Activated T-helper 2 cell treated with anti-CD3 and anti-CD28 coated beads, Interferon-gamma antibody, Interleukin-2, Interleukin-4, amounts not matched to agents 10 μg/mL and 5 μg/mL and 100 μg/mL, durations not matched to agents 14 hours and 24 hours and 36 hours (primary cell): ENCODE measurements at regions of chr10 and their contacts with region 1.

Region 1: GRCh38 chr10:95693668-95694534 is at the start of gene TCTN3:
- DNase-seq: peak; percentile 97
- H3K4me3 Mint-ChIP-seq: peak within 1 kb of the TSS; percentile 99
- H3K27ac Mint-ChIP-seq: peak within 1 kb of the TSS; percentile 97
- H3K4me1 Mint-ChIP-seq: peaks cover 39% of the 10 kb centered on the region
- H3K27me3 Mint-ChIP-seq: no peaks in the 10 kb centered on the region
- total RNA-seq, gene TCTN3: 66.5 and 71.3 TPM in 2 replicates

Region 2: DNA sequence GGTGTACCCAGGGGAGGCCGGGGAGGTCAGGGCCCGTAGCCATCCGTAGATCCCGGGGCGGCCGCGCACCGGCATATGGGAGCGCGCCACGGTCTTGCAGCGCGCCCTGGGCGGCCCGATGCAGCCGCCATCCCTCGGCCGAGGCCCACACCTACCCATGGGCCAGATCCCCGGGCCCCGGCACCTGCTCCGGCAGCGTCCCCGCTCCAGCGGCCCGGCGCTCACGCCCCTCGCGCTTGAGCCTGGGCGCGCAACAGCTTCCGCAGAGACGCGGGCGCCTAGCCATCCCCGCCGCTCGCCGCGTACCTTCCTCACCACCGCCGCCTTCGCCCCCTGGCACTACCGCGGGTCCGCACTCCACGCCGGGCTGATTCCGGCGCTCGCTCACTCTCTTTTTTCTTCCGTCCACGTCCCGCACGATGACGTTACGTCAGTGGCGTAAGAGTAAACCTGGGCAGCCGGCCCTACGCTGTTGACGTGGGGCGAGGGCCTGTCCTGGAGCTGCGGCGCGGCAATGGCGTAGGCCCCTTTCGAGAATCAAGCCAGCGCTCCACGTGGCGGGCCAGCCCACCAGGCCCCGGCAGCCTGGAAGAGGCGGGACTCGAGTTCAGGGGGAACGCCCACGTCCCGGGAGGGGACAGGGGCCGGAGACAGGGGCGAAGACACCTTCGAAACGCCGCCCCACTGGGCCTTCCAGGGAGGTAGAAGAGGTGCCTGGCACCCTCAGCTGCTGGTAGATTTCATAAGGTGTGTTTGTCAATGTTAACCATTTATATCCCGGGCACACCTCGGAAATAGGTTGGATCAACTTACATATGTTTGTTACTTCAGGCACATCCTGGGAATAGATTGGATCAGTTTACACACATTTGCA is 37.4 kb before region 1 on chr10 and contains the start of gene ALDH18A1:
- intact Hi-C with region 1: loop called (anchors 1 kb)
- DNase-seq: peak; percentile 87
- H3K4me3 Mint-ChIP-seq: peak within 1 kb of the TSS; percentile 97
- H3K27ac Mint-ChIP-seq: peak within 1 kb of the TSS; percentile 97
- H3K4me1 Mint-ChIP-seq: peaks cover 17% of the 10 kb centered on the region
- H3K27me3 Mint-ChIP-seq: no peaks in the 10 kb centered on the region
- total RNA-seq, gene ALDH18A1: 121 and 127 TPM in 2 replicates

Region 3: DNA sequence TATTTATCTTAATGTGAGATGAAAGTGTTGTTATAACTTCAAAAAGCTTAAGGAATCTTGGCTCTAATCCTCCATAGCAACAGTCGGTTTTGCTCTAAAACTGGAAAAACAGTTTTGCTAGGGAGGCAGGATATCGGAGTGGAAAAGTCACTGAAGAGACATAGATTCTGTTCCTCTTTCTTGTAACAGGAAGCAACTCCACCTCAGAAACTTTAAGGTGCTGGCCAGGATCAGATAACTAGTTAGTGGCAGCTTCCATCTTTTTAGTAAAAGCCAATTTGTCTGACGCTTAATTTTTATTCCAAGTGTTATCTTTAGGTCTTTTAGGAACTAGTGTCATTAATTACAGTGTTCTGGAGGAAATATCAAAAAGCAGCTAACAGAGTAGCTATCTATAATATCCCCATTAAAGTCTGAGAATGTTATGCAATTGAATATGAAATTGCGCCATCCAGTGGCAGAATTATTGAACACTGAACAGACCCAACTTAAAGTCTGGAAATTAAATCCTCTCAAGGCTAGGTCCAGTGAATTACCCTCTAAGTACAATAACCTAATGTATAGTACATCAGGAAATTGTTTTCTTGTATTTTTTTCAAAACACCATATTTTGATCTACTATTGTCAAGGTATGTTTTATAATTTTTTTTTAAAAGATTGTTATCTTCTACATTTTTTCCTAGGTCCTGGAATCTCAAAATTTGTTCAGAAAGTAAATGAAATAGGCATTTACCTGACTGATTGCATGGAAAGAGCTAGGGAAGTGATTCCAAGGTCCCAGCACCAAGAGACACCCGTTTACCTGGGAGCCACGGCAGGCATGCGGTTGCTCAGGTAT is 148.0 kb after region 1 on chr10:
- intact Hi-C with region 1: loop called (anchors 1 kb)
- DNase-seq: no peak
- H3K4me3 Mint-ChIP-seq: no peak overlapping the region
- H3K27ac Mint-ChIP-seq: peak overlapping the region; percentile 89
- H3K4me1 Mint-ChIP-seq: peaks cover 56% of the 10 kb centered on the region
- H3K27me3 Mint-ChIP-seq: peaks cover 2% of the 10 kb centered on the region

Region 4: DNA sequence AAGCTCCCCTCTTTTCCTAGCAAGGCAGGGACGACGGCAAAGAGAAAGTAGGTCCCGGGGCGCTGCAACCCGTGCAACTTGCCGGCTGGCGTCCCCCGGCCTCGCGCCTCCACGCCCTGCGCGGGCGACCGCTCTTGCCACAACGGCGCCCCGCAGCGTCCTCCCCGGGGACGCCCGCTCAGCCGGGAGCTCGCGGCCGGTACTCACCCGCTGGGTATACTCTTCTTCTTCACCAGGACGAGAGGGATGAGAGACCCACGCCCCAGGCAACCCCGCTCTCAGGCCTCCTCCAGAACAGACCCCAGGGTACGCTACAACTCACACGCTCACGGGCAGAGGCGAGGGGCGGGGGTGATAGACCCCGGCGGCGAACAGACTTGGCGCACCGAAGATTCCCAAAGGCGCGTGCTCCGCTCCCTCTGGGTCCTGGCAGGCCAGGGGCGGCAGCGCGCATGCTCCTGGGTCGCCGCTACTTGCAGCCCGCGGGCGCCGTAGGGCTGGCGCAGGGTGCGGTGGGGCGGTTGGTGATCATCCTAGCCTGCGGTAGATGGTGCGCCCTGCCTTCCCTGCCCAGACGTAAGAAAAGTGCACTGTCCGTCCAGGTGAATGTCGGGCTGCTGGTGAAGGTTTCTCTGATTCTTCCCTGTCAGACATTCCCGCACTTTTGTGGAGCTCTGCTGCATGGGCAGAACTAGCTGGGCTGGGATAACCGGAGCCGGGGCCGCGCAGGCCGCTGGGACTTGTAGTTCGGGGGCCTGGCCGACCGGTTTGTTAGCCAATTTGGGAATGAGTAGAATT is 213.8 kb after region 1 on chr10 and contains the start of gene CC2D2B:
- intact Hi-C with region 1: loop called (anchors 5 kb)
- DNase-seq: peak; percentile 70
- H3K4me3 Mint-ChIP-seq: peak within 1 kb of the TSS; percentile 92
- H3K27ac Mint-ChIP-seq: peak within 1 kb of the TSS; percentile 93
- H3K4me1 Mint-ChIP-seq: peaks cover 18% of the 10 kb centered on the region
- H3K27me3 Mint-ChIP-seq: peaks cover 10% of the 10 kb centered on the region
- total RNA-seq, gene CC2D2B: 0.18 and 0.75 TPM in 2 replicates

Region 5: DNA sequence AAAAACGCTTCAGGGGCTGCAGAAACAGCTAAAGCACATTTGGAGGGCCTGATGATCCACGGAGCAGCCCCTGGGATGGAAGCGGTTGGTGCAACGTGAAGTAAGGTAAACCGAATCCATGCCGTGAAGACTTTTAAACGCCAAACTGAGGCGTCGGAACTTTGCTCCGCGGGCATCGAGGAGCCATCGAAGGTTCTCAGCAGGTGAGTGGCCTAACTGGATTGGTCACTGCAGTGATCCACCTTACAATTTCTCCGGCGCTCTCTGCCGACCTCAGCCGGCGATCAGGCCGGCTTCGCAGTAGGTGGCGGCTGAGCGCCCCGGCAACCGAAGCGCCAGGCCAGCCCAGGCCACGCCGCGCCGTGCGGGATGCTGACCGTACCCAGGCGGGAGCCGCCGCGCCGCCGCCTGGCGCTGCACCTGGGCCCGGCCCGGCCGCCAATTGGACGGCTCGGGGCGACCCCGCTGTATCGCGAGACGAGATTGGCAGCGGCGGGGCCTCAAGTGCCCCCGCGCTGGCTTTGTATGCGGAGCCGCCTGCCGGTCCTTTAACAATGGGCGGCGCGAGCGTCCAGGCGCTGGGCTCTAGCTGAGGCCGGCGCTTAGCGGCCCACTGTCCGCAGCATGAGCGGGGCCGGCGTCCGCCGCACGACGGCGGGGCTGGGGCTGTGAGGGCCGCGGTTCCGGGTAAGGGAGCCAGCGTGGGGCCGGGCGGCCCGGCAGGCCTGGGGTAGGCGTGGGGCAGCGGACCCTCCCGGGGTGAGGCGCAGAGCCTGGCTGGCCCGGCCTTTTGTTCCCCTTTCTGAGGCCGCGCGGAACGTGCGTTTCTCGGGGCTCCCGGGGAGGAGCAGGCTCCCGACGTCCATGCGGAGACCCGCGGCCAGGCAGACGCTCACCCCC is 349.4 kb after region 1 on chr10 and contains the start of gene CCNJ:
- intact Hi-C with region 1: loop called (anchors 5 kb)
- DNase-seq: peak; percentile 76
- H3K4me3 Mint-ChIP-seq: peak within 1 kb of the TSS; percentile 92
- H3K27ac Mint-ChIP-seq: peak within 1 kb of the TSS; percentile 73
- H3K4me1 Mint-ChIP-seq: peaks cover 34% of the 10 kb centered on the region
- H3K27me3 Mint-ChIP-seq: peaks cover 4% of the 10 kb centered on the region
- total RNA-seq, gene CCNJ: 8.3 and 9.3 TPM in 2 replicates